Tibial artery (tissue), 4 donors: ENCODE measurements at regions of chr10 and their contacts with region 1.

Region 1: DNA sequence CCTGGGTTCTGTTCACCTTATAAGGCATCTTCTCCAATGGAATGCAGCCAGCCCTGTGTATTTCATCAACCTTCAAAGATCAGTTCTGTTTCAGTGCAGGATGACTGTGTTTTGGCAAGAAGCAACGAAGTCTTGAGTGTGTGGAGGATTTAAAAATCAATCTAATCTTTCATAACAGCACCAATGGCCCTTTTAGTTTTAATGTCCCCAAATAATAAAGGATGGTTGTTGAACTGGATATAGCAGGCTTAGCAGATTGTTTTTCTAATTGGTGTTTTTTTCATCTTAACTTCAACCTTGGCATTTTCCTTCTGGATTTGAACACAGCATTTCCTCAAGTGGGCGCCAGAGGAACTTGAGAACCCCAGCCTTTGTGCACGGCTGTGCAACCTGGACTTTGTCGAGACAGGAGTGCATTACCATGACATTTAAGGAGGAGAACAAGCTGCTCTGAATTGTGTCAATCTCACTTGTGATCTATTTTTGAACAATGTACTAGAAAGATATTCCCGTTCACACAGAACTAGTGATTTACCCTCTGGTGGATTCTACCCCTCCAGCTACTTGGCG is 313.3 kb upstream of the AKR1E2 start:
- DNase-seq: no peak
- H3K4me3 ChIP-seq: no peak overlapping the region
- H3K27ac ChIP-seq: no peak overlapping the region
- H3K4me1 ChIP-seq: peaks cover 0 to 18% (median 10%) of the 10 kb centered on the region in 4 donors
- H3K27me3 ChIP-seq: no peaks in the 10 kb centered on the region
- CTCF ChIP-seq: peak in 1 of 2 experiments; percentile 36

Region 2: GRCh38 chr10:4656576-4657182 is 143.9 kb after region 1 on chr10:
- intact Hi-C with region 1: loop called (anchors 10 kb)
- DNase-seq: peak; percentile 50 to 83
- H3K4me3 ChIP-seq: no peak overlapping the region
- H3K27ac ChIP-seq: no peak overlapping the region
- H3K4me1 ChIP-seq: peaks cover 0 to 29% (median 7%) of the 10 kb centered on the region in 4 donors
- H3K27me3 ChIP-seq: no peaks in the 10 kb centered on the region
- CTCF ChIP-seq: peak; percentile 89

Region 3: GRCh38 chr10:4947635-4948596 is 435.2 kb after region 1 on chr10:
- intact Hi-C with region 1: no loop called
- DNase-seq: peak; percentile 64 to 78
- H3K4me3 ChIP-seq: no peak overlapping the region
- H3K27ac ChIP-seq: peak overlapping the region; percentile 79 to 82
- H3K4me1 ChIP-seq: peaks cover 0 to 62% (median 35%) of the 10 kb centered on the region in 4 donors
- H3K27me3 ChIP-seq: no peaks in the 10 kb centered on the region
- CTCF ChIP-seq: no peak